MCF 10A (cell line): ENCODE measurements at regions of chr10 and their contacts with region 1.

Region 1: DNA sequence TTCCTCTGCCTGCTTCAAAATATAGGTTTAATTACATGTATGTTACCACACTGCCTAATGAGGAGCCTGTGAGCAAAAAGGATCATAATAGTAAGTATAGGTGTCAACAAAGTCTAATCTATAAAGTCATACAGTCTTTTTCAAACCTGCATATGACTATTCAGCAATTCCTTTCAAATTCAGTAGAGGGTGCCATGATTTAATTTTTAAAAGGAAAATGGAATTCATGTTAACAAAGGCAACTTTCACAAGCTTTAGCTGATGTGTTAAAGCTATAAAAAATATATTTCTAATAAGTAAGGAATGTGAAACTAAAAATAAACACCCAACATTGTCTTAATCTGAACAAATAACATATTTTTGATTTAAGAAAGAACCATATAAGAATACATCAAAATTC is 52.1 kb downstream of the MPP7 start:
- DNase-seq: peak; percentile 28
- H3K4me3 Mint-ChIP-seq: no peak overlapping the region
- H3K27ac Mint-ChIP-seq: no peak overlapping the region
- H3K4me1 Mint-ChIP-seq: peaks cover 17% of the 10 kb centered on the region
- H3K27me3 Mint-ChIP-seq: no peaks in the 10 kb centered on the region
- CTCF ChIP-seq: peak; percentile 60

Region 2: DNA sequence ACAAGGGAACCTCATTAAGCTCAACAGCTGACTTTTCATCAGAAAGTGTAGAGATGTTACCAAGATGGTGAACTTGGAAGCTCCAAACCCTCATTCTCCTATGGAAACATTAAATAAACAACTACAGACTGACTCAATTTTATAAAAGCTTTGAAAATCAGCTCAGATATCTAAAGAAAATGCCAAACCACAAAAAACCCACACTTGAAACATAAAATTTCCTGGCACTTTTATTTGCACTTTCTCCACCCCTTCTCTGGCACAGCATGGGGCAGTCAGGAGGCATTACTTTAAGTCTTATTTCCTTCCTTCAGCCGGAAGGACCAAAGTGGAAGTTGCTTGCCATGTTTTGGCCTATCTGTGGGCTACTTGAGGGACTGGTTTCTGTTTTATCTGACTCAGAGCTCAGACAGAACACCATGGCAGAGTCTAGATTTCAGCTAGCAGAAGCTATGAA is 366.6 kb before region 1 on chr10:
- CTCF ChIA-PET with region 1: no interaction called
- POLR2A ChIA-PET with region 1: no interaction called
- intact Hi-C with region 1: no loop called
- DNase-seq: peak; percentile 3
- H3K4me3 Mint-ChIP-seq: no peak overlapping the region
- H3K27ac Mint-ChIP-seq: no peak overlapping the region
- H3K4me1 Mint-ChIP-seq: no peaks in the 10 kb centered on the region
- H3K27me3 Mint-ChIP-seq: no peaks in the 10 kb centered on the region
- CTCF ChIP-seq: no peak

Region 3: DNA sequence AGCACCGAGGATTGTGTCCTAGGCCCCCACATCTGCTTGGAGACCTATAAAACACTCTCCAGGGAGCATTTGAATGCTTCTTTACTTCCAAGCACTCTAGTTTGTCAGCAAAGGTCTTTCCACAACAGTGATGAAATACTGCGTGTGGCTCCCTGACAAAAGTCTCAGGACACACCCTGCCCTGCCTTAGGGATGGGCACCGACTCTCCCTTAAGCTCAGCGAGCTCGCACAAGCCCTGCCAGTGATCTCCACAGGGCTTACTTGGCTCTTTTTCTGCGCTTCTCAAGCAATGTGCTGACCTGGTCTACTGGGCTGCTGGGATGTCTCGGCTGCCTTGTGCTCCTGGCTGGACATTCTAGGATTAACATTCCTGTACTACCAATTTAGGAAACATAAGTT is 136.4 kb after region 1 on chr10:
- CTCF ChIA-PET with region 1: interaction called, 154 read pairs
- POLR2A ChIA-PET with region 1: interaction called, 20 read pairs
- intact Hi-C with region 1: loop called (anchors 1 kb)
- DNase-seq: peak; percentile 63
- H3K4me3 Mint-ChIP-seq: no peak overlapping the region
- H3K27ac Mint-ChIP-seq: peak overlapping the region; percentile 80
- H3K4me1 Mint-ChIP-seq: peaks cover 22% of the 10 kb centered on the region
- H3K27me3 Mint-ChIP-seq: no peaks in the 10 kb centered on the region
- CTCF ChIP-seq: no peak

Region 4: GRCh38 chr10:28393966-28394568 is 143.3 kb after region 1 on chr10:
- CTCF ChIA-PET with region 1: interaction called, 47 read pairs
- POLR2A ChIA-PET with region 1: interaction called, 7 read pairs
- intact Hi-C with region 1: loop called (anchors 1 kb)
- DNase-seq: peak; percentile 76
- H3K4me3 Mint-ChIP-seq: no peak overlapping the region
- H3K27ac Mint-ChIP-seq: no peak overlapping the region
- H3K4me1 Mint-ChIP-seq: peaks cover 5% of the 10 kb centered on the region
- H3K27me3 Mint-ChIP-seq: no peaks in the 10 kb centered on the region
- CTCF ChIP-seq: peak; percentile 86